CD8-positive, alpha-beta T cell (primary cell): ENCODE measurements at regions of chr5 and their contacts with region 1.

Region 1: DNA sequence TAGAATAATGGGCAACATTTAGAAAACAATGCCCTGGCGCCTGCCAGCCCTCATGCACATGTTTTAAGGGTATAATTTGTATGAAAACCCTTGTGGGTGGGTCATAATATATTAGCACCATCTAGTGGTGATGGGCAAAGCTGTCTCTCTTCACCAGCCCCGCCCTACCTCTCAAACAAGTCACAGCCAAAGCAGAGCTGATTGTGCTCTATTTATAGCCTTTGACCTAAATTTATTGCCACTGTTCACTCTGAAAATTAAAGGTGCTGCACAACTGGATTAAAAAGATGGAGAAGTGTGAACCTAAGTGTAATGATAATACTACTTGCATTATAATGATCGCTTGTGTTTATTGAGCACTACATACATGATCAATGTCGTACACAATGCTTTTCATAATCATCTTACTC is 131.9 kb upstream of the ANKH start:
- DNase-seq: peak; percentile 24 to 82 (median 53)
- ATAC-seq: peak; percentile 99
- H3K4me3 ChIP-seq: no peak overlapping the region
- H3K4me3 Mint-ChIP-seq: no peak overlapping the region
- H3K27ac ChIP-seq: no peak overlapping the region
- H3K27ac Mint-ChIP-seq: no peak overlapping the region
- H3K4me1 ChIP-seq: no peaks in the 10 kb centered on the region
- H3K4me1 Mint-ChIP-seq: no peaks in the 10 kb centered on the region
- H3K27me3 ChIP-seq: no peaks in the 10 kb centered on the region
- H3K27me3 Mint-ChIP-seq: peaks cover 5% of the 10 kb centered on the region
- CTCF ChIP-seq: peak; percentile 78

Region 2: DNA sequence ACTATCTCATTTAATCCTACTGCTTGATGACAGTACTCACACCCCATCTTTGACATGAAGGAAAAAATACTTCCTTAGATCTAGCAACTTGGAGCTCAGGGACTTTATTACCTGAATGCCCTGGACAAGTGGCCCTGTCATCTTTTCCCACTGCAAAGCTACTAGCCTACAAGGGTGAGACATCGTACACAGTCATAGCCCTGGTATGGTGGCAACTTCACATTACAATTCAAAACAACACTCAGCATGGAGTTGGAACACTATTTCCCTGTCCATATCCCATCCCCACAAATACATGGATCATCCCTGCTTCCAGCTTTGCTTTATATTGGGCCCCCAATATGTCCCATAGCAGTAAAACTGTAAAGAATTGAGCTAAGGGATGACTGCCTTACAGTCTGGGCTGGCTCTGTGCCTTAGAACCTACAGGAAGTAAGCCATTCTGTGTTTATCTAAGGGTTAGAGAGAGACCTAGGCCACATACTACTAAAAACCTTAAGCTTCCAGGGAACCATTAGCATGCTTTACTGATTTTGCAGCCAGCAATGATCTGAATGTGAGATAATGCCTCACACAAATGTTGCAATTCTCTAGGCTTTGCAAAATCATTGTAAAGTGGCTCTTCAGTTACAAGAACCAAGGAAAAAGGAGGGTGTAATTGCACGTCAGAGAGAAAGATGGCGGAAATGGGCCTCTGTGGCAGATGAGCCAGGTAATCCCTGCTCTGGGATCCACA is 283.1 kb before region 1 on chr5:
- CTCF ChIA-PET with region 1: interaction called, 100 read pairs
- POLR2A ChIA-PET with region 1: no interaction called
- intact Hi-C with region 1: no loop called
- DNase-seq: no peak
- ATAC-seq: no peak
- H3K4me3 ChIP-seq: no peak overlapping the region
- H3K4me3 Mint-ChIP-seq: no peak overlapping the region
- H3K27ac ChIP-seq: no peak overlapping the region
- H3K27ac Mint-ChIP-seq: peak overlapping the region; percentile 60
- H3K4me1 ChIP-seq: peaks cover 10% of the 10 kb centered on the region
- H3K4me1 Mint-ChIP-seq: peaks cover 26% of the 10 kb centered on the region
- H3K27me3 ChIP-seq: no peaks in the 10 kb centered on the region
- H3K27me3 Mint-ChIP-seq: no peaks in the 10 kb centered on the region
- CTCF ChIP-seq: no peak

Region 3: GRCh38 chr5:14946815-14947640 is 56.5 kb before region 1 on chr5:
- CTCF ChIA-PET with region 1: interaction called, 24 read pairs
- POLR2A ChIA-PET with region 1: interaction called, 5 read pairs
- intact Hi-C with region 1: loop called (anchors 1 kb)
- DNase-seq: peak in 7 of 9 experiments; percentile 15 to 76 (median 38)
- ATAC-seq: peak; percentile 97
- H3K4me3 ChIP-seq: no peak overlapping the region
- H3K4me3 Mint-ChIP-seq: no peak overlapping the region
- H3K27ac ChIP-seq: no peak overlapping the region
- H3K27ac Mint-ChIP-seq: no peak overlapping the region
- H3K4me1 ChIP-seq: no peaks in the 10 kb centered on the region
- H3K4me1 Mint-ChIP-seq: peaks cover 4% of the 10 kb centered on the region
- H3K27me3 ChIP-seq: no peaks in the 10 kb centered on the region
- H3K27me3 Mint-ChIP-seq: peaks cover 14% of the 10 kb centered on the region
- CTCF ChIP-seq: peak; percentile 68

Region 4: GRCh38 chr5:14983666-14984441 is 19.7 kb before region 1 on chr5:
- CTCF ChIA-PET with region 1: interaction called, 29 read pairs
- POLR2A ChIA-PET with region 1: no interaction called
- intact Hi-C with region 1: no loop called
- DNase-seq: peak in 7 of 9 experiments; percentile 23 to 62 (median 37)
- ATAC-seq: peak; percentile 88
- H3K4me3 ChIP-seq: no peak overlapping the region
- H3K4me3 Mint-ChIP-seq: peak overlapping the region; percentile 26
- H3K27ac ChIP-seq: no peak overlapping the region
- H3K27ac Mint-ChIP-seq: no peak overlapping the region
- H3K4me1 ChIP-seq: peaks cover 20% of the 10 kb centered on the region
- H3K4me1 Mint-ChIP-seq: peaks cover 27% of the 10 kb centered on the region
- H3K27me3 ChIP-seq: no peaks in the 10 kb centered on the region
- H3K27me3 Mint-ChIP-seq: no peaks in the 10 kb centered on the region
- CTCF ChIP-seq: no peak